PC-9 (cell line): ENCODE measurements at regions of chr19 and their contacts with region 1.

Region 1: DNA sequence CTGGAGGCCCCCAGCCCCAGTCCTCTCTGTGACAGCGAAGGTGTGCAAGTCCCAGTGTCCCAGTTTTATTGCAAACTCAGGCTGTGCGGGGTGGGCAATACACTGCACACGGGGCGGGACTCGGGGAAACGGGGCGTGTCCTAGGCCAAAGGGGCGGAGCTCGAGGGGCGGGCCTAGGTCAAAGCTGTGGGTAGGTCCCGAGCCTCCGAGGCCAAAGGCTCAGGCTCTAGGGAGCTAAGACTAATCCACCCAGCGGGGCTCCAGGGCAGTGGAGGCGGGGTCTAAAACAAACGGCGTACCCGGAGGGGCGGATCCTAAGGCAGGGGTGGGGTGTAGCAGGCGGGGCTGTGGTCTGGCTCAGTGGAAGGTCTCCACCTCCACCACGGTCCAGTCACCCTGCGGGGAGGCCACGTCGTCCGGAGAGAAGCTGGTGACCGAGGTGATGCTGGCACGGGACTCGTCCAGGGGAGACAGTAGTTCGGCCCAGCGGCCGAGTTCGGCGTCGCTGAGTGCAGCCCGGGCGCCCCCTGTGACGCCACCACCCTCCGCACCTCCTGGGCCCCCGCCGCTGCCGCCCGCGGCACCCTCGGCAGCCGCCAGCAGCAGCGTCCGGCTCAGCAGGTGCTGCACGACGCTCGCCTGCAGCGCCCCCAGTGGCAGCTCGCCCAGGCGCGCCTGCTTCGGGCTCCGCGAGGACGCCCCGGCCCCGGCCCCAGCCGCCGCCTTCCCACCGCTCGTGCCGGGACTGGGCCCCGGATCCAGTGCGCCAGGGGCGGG is 5.3 kb downstream of the PRR36 start:
- DNase-seq: peak; percentile 90 to 94
- H3K4me3 ChIP-seq: peak overlapping the region; percentile 70
- H3K27ac ChIP-seq: no peak overlapping the region
- H3K4me1 ChIP-seq: peaks cover 25% of the 10 kb centered on the region
- H3K27me3 ChIP-seq: no peaks in the 10 kb centered on the region
- CTCF ChIP-seq: peak; percentile 73

Region 2: GRCh38 chr19:7829561-7830271 is 39.1 kb before region 1 on chr19 and contains the start of gene EVI5L:
- CTCF ChIA-PET with region 1: no interaction called
- POLR2A ChIA-PET with region 1: no interaction called
- intact Hi-C with region 1: loop called (anchors 2 kb)
- DNase-seq: peak; percentile 98 to 100
- H3K4me3 ChIP-seq: peak within 1 kb of the TSS; percentile 56; the same call in 1 of the 2 replicates
- H3K27ac ChIP-seq: no peak within 1 kb of the TSS
- H3K4me1 ChIP-seq: peaks cover 22% of the 10 kb centered on the region
- H3K27me3 ChIP-seq: peaks cover 13% of the 10 kb centered on the region; the same call in 1 of the 2 replicates
- CTCF ChIP-seq: no peak; the same call in 1 of the 2 replicates
- total RNA-seq, gene EVI5L: 13.1 and 19.2 TPM in 2 replicates

Region 3: DNA sequence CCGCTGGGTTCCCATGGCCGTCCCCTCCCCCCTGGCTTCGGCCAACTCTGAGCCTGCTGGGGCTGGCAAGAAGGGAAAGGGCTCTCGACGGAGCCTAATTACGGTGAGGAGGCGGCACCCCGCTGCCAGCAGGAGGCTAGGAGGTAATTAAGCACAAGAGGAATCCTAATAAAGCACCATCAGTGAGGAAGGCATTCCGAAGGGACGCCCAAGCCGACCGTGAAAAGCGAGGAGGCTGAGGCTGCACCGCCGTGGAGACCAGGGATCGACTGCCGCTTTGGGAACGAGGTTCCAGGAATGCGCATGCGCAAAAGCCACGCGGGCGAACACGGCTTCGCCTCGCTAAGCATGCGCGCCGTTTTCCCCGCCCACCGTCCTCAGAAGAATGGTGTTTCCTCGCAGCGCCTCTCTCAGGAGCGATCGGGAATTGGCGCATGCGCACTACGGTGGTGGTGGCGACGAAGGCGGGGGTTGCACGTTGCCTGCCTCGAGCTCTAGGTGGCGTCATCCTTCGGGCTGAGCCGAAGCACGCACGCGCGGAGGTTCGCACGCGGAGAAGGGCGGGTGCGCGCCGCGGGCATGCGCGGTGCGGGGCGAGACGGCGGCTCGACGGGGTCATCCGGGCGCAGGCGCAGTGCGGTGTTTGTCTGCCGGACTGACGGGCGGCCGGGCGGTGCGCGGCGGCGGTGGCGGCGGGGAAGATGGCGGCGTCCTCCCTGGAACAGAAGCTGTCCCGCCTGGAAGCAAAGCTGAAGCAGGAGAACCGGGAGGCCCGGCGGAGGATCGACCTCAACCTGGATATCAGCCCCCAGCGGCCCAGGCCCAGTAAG is 34.6 kb after region 1 on chr19 and contains the start of gene MAP2K7:
- CTCF ChIA-PET with region 1: interaction called, 10 read pairs
- POLR2A ChIA-PET with region 1: interaction called, 5 read pairs
- intact Hi-C with region 1: loop called (anchors 1 kb)
- DNase-seq: peak; percentile 97 to 100
- H3K4me3 ChIP-seq: peak within 1 kb of the TSS; percentile 86
- H3K27ac ChIP-seq: peak within 1 kb of the TSS; percentile 68
- H3K4me1 ChIP-seq: peaks cover 16% of the 10 kb centered on the region; the same call in 1 of the 2 replicates
- H3K27me3 ChIP-seq: no peaks in the 10 kb centered on the region
- CTCF ChIP-seq: peak; percentile 51; the same call in 1 of the 2 replicates
- total RNA-seq, gene MAP2K7: 52.4 and 54.0 TPM in 2 replicates

Region 4: GRCh38 chr19:7943444-7944176 is 74.7 kb after region 1 on chr19 and contains the start of gene TIMM44:
- CTCF ChIA-PET with region 1: interaction called, 10 read pairs
- POLR2A ChIA-PET with region 1: no interaction called
- intact Hi-C with region 1: no loop called
- DNase-seq: peak; percentile 99
- H3K4me3 ChIP-seq: peak within 1 kb of the TSS; percentile 87
- H3K27ac ChIP-seq: peak within 1 kb of the TSS; percentile 91
- H3K4me1 ChIP-seq: peaks cover 17% of the 10 kb centered on the region
- H3K27me3 ChIP-seq: no peaks in the 10 kb centered on the region
- CTCF ChIP-seq: no peak
- total RNA-seq, gene TIMM44: 72.8 and 74.6 TPM in 2 replicates

Region 5: GRCh38 chr19:7975037-7975436 is 106.2 kb after region 1 on chr19:
- CTCF ChIA-PET with region 1: no interaction called
- POLR2A ChIA-PET with region 1: no interaction called
- intact Hi-C with region 1: no loop called
- DNase-seq: no peak
- H3K4me3 ChIP-seq: no peak overlapping the region
- H3K27ac ChIP-seq: no peak overlapping the region
- H3K4me1 ChIP-seq: no peaks in the 10 kb centered on the region
- H3K27me3 ChIP-seq: no peaks in the 10 kb centered on the region
- CTCF ChIP-seq: no peak

Region 6: GRCh38 chr19:8005534-8006256 is 136.8 kb after region 1 on chr19 and contains the start of gene ELAVL1:
- CTCF ChIA-PET with region 1: no interaction called
- POLR2A ChIA-PET with region 1: no interaction called
- intact Hi-C with region 1: no loop called
- DNase-seq: peak; percentile 76 to 91
- H3K4me3 ChIP-seq: peak within 1 kb of the TSS; percentile 83
- H3K27ac ChIP-seq: peak within 1 kb of the TSS; percentile 31; the same call in 1 of the 2 replicates
- H3K4me1 ChIP-seq: peaks cover 30% of the 10 kb centered on the region
- H3K27me3 ChIP-seq: no peaks in the 10 kb centered on the region
- CTCF ChIP-seq: no peak
- total RNA-seq, gene ELAVL1: 101 and 108 TPM in 2 replicates